ENCODE measurements at regions of chr2 and their contacts with region 1.

Region 1: GRCh38 chr2:8215159-8215863 is 466.5 kb upstream of the ID2 start:
- DNase-seq: no peak
- ATAC-seq: no peak
- H3K4me3 ChIP-seq: peak overlapping the region in 1 of 12 donors; percentile 2
- H3K27ac ChIP-seq: peak overlapping the region in 1 of 12 donors; percentile 8
- H3K4me1 ChIP-seq: peaks cover 0 to 16% (median 5%) of the 10 kb centered on the region in 12 donors
- H3K27me3 ChIP-seq: no peaks in the 10 kb centered on the region
- CTCF ChIP-seq: no peak
- POLR2A ChIP-seq: no peak

Region 2: GRCh38 chr2:8132351-8132831 is 82.9 kb before region 1 on chr2:
- intact Hi-C with region 1: loop called in 1 of 10 experiments (anchors 5 kb)
- DNase-seq: peak; percentile 30 to 71 (median 41)
- ATAC-seq: peak in 3 of 4 donors; percentile 68 to 84 (median 79)
- H3K4me3 ChIP-seq: no peak overlapping the region
- H3K27ac ChIP-seq: peak overlapping the region in 10 of 12 donors; percentile 13 to 84 (median 55)
- H3K4me1 ChIP-seq: peaks cover 0 to 40% (median 18%) of the 10 kb centered on the region in 12 donors
- H3K27me3 ChIP-seq: no peaks in the 10 kb centered on the region
- CTCF ChIP-seq: no peak
- POLR2A ChIP-seq: no peak

Region 3: DNA sequence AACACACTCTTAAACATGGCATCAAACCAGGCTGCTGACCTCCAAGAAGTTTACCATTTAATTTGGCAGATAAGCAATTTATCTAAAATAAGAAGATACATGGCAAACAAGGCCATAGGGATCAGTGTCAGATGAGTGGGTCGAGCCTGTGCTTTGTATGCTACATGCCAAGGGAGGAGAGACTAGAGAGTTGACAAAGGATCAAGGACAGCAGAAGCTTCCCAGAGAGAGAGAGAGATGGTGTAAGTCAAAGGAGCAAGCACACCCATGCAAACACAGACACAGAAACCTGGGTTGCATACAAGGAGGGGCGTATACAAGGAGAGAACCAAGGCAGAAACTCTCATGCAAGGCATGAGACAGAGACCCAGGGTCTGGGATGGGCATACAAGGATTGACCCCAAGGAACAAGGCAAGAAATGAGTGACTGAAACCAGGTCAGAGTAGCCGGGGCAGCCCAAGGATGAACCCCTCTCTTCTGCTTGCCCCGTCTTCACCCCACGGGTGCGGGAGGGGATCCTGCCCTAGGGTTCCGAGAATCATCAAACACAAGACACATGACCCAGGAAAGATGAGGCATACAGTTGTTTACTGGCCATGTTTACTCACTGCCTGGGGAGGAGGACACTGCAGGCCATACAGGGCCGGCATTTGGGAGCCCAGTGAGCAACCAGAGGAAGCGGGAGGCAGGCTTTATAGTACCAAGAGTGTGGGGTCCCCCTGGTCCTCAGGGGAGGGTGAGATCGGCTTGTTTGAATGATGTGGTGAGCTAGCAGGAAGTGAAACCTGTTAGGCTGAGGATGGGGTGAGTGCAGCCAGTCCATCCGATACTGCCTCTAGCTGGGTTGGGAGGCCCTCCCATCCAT is 62.7 kb before region 1 on chr2:
- intact Hi-C with region 1: loop called in 1 of 10 experiments (anchors 5 kb)
- DNase-seq: no peak
- ATAC-seq: no peak
- H3K4me3 ChIP-seq: no peak overlapping the region
- H3K27ac ChIP-seq: no peak overlapping the region
- H3K4me1 ChIP-seq: peaks cover 0 to 9% (median 0%) of the 10 kb centered on the region in 12 donors
- H3K27me3 ChIP-seq: no peaks in the 10 kb centered on the region
- CTCF ChIP-seq: no peak
- POLR2A ChIP-seq: no peak

Region 4: DNA sequence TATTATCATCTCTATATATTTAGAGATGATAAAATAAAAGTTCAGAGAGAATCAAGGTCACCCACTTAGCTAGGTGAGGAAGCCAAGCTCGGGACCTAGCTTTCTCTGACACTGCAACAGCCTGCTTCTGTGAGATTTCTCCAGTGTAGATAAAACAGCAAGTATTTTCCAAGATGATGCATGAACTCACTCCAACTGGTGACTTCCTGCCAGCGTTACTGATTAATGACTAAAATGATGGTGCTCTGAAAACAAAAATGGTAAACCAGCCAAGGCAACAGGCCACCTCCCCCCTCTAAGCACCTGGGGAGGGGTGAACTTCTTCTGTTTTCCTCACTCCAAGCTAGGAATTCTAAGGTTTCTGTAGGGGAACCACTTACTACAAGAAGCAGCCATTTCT is 43.7 kb before region 1 on chr2:
- intact Hi-C with region 1: no loop called
- DNase-seq: no peak
- ATAC-seq: peak in 3 of 4 donors; percentile 39 to 72 (median 56)
- H3K4me3 ChIP-seq: no peak overlapping the region
- H3K27ac ChIP-seq: no peak overlapping the region
- H3K4me1 ChIP-seq: peaks cover 0 to 22% (median 6%) of the 10 kb centered on the region in 12 donors
- H3K27me3 ChIP-seq: no peaks in the 10 kb centered on the region
- CTCF ChIP-seq: no peak
- POLR2A ChIP-seq: no peak

Region 5: DNA sequence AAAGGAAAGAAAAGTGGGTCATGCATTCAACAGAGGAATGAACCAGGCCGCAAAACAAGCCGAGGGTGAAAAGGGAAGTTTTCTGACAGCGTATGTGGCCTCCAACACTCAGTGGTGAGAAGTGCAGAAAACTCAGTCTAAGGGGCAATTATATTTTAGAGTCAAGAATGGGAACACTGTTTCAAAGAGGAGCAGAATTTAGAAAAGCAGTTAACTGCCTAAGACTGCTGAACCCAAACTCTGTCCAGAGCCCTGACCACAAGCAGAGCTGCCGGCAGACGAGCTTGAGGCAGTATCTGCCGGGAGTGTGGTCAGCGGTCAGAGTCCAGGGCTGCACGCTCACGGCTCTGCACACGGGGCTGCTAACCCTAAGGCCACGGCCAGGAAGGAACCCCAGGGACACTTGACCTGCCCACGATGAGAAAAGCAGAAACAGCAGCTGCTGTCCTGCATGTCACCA is 119.6 kb after region 1 on chr2:
- intact Hi-C with region 1: no loop called
- DNase-seq: no peak
- ATAC-seq: peak in 1 of 4 donors; percentile 15
- H3K4me3 ChIP-seq: no peak overlapping the region
- H3K27ac ChIP-seq: no peak overlapping the region
- H3K4me1 ChIP-seq: peaks cover 0 to 25% (median 0%) of the 10 kb centered on the region in 12 donors
- H3K27me3 ChIP-seq: no peaks in the 10 kb centered on the region
- CTCF ChIP-seq: no peak
- POLR2A ChIP-seq: no peak